ENCODE measurements at regions of chr1 and their contacts with region 1.

Region 1: DNA sequence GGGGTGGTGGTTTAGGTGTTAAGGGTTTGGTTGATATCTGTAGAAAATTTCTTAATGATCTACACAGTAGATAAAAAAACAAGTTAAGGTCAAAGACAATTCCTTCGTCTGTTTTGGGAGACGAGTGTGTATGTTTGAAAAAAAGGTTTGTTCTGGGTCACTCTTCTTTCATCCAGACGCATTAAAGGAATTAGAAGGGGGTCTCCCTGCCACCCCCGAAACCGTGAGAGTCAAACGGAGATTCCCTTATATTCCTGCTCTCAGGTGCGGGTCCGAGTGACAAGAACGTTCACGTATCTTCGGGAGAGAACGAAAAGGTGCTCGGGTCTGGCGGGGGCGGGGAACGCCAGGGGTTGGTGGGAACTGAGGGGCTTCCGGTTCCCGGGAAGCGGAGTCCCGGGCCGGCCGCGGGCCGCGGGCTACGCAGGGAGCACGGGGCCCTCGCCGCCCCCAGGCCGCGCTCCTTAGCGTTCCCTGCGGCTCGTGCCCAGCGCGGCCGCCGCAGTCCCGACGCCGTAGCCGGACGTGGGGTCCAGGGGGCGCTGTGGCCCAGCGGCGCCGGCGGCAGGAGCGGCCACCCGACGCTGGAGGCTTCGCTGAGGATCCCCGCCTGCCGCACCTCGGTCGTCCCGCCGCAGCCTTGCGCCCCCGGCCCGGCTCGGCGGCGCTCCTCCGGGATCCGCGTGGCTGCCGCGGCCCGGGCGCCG is at the start of gene ZFYVE9:
- DNase-seq: peak in 1 of 2 donors; percentile 83
- H3K4me3 ChIP-seq: peak within 1 kb of the TSS; percentile 95 to 98
- H3K27ac ChIP-seq: peak within 1 kb of the TSS; percentile 96 to 98
- H3K4me1 ChIP-seq: peaks cover 0 to 30% of the 10 kb centered on the region in 2 donors
- H3K27me3 ChIP-seq: no peaks in the 10 kb centered on the region
- CTCF ChIP-seq: peak; percentile 46 to 93 (median 52)
- total RNA-seq, gene ZFYVE9: 8.1 TPM

Region 2: DNA sequence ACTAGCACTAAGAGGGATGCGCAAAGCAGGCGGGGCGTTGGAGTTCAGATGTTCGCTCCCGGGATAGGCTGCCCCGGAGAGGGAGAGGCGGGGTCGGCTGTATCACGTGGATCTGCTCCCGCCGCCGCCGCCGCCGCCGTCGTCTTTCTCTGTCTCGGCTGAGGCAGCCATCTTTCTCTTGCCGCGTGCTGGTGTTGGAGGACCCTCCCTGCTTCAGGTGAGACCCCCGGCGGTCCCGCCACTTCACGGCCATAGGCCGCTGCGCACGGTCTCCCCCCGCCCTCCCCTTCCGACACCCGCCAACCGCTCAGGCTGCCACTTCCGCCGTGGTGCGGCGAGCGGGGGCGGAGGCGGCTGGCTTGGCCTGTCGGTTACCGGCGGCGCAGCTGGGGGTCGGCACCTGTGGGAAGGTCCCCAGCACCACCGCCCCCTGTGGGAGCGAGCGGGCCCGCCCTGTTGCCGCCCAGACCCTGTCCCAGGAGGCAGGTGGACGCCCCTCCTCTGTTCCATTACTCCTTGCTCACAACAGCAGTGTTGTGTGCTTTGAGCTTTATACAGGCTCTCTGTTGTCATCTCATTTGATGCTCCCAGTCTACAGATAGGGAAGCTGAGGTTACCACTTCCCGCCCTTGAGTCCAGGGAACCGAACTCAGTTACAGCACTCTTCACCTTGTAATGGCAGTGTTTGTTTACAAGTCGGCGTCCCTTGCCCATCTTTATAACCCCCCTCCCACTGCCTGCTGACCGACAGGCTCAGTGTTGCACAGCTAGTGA is 85.3 kb before region 1 on chr1 and contains the start of gene BTF3L4:
- intact Hi-C with region 1: loop called (anchors 2 kb)
- DNase-seq: peak; percentile 85 to 97
- H3K4me3 ChIP-seq: peak within 1 kb of the TSS; percentile 84 to 90
- H3K27ac ChIP-seq: peak within 1 kb of the TSS; percentile 91 to 95
- H3K4me1 ChIP-seq: peaks cover 3 to 17% of the 10 kb centered on the region in 2 donors
- H3K27me3 ChIP-seq: no peaks in the 10 kb centered on the region
- CTCF ChIP-seq: no peak
- total RNA-seq, gene BTF3L4: 39.9 TPM

Region 3: GRCh38 chr1:52281518-52281917 is 139.9 kb after region 1 on chr1:
- intact Hi-C with region 1: no loop called
- DNase-seq: no peak
- H3K4me3 ChIP-seq: no peak overlapping the region
- H3K27ac ChIP-seq: no peak overlapping the region
- H3K4me1 ChIP-seq: no peaks in the 10 kb centered on the region
- H3K27me3 ChIP-seq: no peaks in the 10 kb centered on the region
- CTCF ChIP-seq: no peak

Region 4: DNA sequence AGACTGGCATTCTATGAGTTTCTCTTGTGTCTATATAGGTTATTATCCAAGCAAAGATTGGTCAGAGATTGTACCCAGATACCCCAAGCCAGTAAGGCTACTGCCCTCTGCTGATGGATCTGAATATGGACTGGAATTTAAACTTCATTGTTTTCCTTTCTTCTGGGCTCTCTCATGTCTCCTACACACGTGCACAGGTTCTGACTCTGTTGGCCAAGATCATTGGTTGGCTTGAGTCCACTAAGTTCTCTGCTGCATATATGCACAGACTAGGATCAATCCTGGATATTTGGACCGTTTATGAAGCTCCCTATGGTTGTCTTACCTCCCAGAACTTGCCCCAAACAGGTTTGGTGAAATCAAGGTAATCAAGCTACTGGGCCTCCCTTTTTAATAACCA is 154.7 kb after region 1 on chr1:
- intact Hi-C with region 1: loop called (anchors 2 kb)
- DNase-seq: no peak
- H3K4me3 ChIP-seq: no peak overlapping the region
- H3K27ac ChIP-seq: no peak overlapping the region
- H3K4me1 ChIP-seq: no peaks in the 10 kb centered on the region
- H3K27me3 ChIP-seq: no peaks in the 10 kb centered on the region
- CTCF ChIP-seq: peak; percentile 57 to 66 (median 63)

Region 5: GRCh38 chr1:52404116-52404986 is 262.7 kb after region 1 on chr1 and contains the starts of genes ORC1 and PRPF38A:
- intact Hi-C with region 1: loop called (anchors 10 kb)
- DNase-seq: peak; percentile 85 to 98
- H3K4me3 ChIP-seq: peak within 1 kb of the TSS; percentile 87 to 91
- H3K27ac ChIP-seq: peak within 1 kb of the TSS; percentile 85 to 96
- H3K4me1 ChIP-seq: peaks cover 10 to 15% of the 10 kb centered on the region in 2 donors
- H3K27me3 ChIP-seq: no peaks in the 10 kb centered on the region
- CTCF ChIP-seq: peak; percentile 32 to 59 (median 51)
- total RNA-seq, gene ORC1: not detected
- total RNA-seq, gene PRPF38A: 20.3 TPM

Region 6: DNA sequence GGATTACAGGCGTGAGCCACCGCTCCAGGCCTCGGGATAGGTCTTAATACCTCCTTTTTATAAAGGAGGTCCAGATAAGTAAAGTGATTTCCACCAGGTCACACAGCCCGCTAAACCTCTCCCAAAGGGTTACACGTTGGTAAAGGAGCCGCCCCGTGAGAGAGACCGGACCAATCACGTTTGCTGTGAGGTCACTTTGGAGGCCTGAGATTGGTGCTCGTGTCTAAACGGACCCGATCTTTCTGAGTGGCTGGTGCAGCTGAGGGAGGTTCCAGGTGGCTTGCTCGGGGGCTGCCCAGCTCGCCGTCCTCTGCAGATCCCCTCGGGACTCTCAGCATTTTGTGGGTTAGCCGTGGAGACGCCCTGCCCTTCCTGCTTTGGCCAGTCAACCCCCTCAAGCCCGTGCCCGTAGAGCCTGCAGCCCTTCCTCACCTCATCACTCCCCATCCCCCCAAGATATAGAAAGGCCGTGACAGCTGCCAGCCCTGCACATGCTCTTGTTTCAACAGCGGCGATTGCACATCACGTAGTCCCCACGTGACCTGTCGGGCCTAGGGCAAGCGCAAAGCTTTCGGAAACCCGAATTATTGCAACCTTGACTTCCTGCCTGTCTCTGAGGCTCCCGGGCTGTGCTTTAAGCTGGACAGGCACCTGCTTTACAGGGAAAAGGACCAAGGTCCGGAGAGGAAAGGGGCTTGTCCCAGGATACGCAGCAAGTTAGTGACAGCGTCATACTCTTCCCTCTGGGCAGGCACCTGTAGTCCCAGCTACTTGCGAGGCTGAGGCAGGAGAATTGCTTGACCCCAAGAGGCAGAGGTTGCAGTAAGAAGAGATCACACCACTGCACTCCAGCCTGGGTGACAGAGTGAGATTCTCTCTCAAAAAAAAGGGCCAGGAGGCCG is 561.5 kb after region 1 on chr1:
- intact Hi-C with region 1: loop called (anchors 10 kb)
- DNase-seq: peak; percentile 85 to 95
- H3K4me3 ChIP-seq: peak overlapping the region; percentile 59
- H3K27ac ChIP-seq: peak overlapping the region; percentile 70 to 74
- H3K4me1 ChIP-seq: peaks cover 0 to 3% of the 10 kb centered on the region in 2 donors
- H3K27me3 ChIP-seq: no peaks in the 10 kb centered on the region
- CTCF ChIP-seq: no peak